Spleen (tissue), 13 donors: ENCODE measurements at regions of chr4 and their contacts with region 1.

Region 1: DNA sequence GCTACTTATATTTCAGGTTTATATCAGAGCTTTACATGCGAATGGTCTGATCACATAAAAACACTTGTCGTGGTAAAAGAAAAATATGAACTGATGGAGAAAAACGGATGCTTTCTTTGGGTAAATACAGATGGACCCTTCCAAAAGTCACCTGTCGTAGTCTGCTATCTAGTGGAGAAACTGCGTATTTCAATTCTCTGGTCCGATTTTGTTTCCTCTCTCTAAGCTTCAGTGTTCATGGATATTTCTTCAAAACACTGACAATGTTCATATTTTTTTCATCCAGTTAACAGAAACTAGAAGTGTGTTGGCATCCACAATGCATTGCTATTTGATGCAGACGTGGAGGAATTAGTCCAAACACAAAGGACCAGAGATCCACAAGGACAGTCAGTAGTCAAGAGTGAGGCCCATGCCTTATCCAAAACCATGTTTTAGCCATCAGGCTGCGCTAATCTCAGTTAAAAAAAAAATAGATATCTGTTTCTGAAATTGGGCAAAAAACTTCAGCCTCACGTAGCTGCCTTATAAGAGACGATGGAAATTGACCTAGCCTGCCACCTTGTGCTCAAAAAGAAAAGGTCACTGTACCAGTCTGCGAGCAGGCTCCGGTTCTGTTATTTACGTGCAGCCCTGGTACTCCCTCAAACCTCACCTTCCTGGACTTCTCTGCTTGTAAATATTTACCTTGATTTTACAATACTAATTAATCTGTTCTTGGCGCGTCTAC is 16.0 kb downstream of the MEPE start:
- DNase-seq: no peak
- H3K4me3 ChIP-seq: peak overlapping the region in 1 of 8 donors; percentile 46
- H3K27ac ChIP-seq: peak overlapping the region in 1 of 8 donors; percentile 84
- H3K4me1 ChIP-seq: peaks cover 0 to 36% (median 20%) of the 10 kb centered on the region in 6 donors
- H3K27me3 ChIP-seq: peaks cover 0 to 23% (median 0%) of the 10 kb centered on the region in 7 donors
- CTCF ChIP-seq: peak in 10 of 11 experiments; percentile 9 to 70 (median 55)
- POLR2A ChIP-seq: no peak

Region 2: DNA sequence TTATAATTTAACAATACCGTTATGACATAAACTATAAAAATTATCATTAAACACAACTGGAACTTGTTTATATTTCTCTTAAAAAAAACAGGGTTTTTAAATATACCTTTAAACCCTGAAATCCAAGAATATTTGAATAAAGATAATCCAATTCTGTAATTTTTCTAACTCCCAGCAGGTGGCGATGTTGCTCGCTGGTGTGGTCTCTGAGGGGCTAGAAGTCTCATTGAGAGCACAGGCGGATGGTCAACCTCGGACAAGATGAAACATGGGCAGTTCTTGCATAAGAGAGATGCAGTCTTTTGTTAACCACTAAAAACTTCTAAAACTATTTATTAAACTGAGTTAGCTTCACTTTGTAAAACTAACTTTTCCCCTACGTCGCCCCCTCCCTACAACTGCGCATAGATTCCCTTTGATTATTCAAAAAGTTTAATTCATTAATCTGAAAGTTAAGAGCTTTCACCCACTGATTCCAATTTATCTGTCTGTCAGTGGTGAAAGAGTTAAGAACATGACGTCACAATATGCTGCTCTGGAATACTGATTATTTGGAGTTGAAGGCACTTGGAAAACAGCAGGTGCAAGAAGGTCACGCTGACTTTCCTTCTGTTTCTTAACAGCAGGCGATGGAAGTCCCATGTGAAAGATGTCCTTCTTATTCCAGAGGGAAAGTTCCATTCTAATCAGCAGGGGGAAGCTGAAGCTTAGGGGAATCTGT is 169.2 kb before region 1 on chr4:
- intact Hi-C with region 1: loop called (anchors 5 kb)
- DNase-seq: no peak
- H3K4me3 ChIP-seq: no peak overlapping the region
- H3K27ac ChIP-seq: no peak overlapping the region
- H3K4me1 ChIP-seq: peaks cover 0 to 10% (median 0%) of the 10 kb centered on the region in 6 donors
- H3K27me3 ChIP-seq: no peaks in the 10 kb centered on the region
- CTCF ChIP-seq: peak; percentile 22 to 65 (median 62)
- POLR2A ChIP-seq: no peak

Region 3: DNA sequence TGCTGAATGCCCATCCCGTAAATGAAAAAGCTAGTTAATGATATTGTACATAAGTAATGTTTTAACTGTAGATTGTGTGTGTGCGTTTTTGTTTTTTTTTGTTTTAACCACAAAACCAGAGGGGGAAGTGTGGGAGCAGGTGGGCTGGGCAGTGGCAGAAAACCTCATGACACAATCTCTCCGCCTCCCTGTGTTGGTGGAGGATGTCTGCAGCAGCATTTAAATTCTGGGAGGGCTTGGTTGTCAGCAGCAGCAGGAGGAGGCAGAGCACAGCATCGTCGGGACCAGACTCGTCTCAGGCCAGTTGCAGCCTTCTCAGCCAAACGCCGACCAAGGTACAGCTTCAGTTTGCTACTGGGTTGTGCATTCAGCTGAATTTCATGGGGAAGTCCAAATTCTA is 126.7 kb after region 1 on chr4 and contains the start of gene SPP1:
- intact Hi-C with region 1: loop called (anchors 5 kb)
- DNase-seq: peak; percentile 50
- H3K4me3 ChIP-seq: no peak within 1 kb of the TSS
- H3K27ac ChIP-seq: no peak within 1 kb of the TSS
- H3K4me1 ChIP-seq: peaks cover 0 to 26% (median 10%) of the 10 kb centered on the region in 6 donors
- H3K27me3 ChIP-seq: peaks cover 0 to 50% (median 7%) of the 10 kb centered on the region in 7 donors
- CTCF ChIP-seq: no peak
- POLR2A ChIP-seq: no peak
- total RNA-seq, gene SPP1: 0.77 to 7.2 (median 1.5) TPM

Region 4: GRCh38 chr4:88211473-88212252 is 362.9 kb after region 1 on chr4:
- intact Hi-C with region 1: loop called (anchors 5 kb)
- DNase-seq: no peak
- H3K4me3 ChIP-seq: no peak overlapping the region
- H3K27ac ChIP-seq: no peak overlapping the region
- H3K4me1 ChIP-seq: peaks cover 0 to 6% (median 0%) of the 10 kb centered on the region in 6 donors
- H3K27me3 ChIP-seq: no peaks in the 10 kb centered on the region
- CTCF ChIP-seq: peak; percentile 35 to 79 (median 66)
- POLR2A ChIP-seq: no peak

Region 5: GRCh38 chr4:88268913-88269312 is 420.1 kb after region 1 on chr4:
- intact Hi-C with region 1: no loop called
- DNase-seq: no peak
- H3K4me3 ChIP-seq: no peak overlapping the region
- H3K27ac ChIP-seq: no peak overlapping the region
- H3K4me1 ChIP-seq: no peaks in the 10 kb centered on the region
- H3K27me3 ChIP-seq: no peaks in the 10 kb centered on the region
- CTCF ChIP-seq: no peak
- POLR2A ChIP-seq: no peak

Region 6: DNA sequence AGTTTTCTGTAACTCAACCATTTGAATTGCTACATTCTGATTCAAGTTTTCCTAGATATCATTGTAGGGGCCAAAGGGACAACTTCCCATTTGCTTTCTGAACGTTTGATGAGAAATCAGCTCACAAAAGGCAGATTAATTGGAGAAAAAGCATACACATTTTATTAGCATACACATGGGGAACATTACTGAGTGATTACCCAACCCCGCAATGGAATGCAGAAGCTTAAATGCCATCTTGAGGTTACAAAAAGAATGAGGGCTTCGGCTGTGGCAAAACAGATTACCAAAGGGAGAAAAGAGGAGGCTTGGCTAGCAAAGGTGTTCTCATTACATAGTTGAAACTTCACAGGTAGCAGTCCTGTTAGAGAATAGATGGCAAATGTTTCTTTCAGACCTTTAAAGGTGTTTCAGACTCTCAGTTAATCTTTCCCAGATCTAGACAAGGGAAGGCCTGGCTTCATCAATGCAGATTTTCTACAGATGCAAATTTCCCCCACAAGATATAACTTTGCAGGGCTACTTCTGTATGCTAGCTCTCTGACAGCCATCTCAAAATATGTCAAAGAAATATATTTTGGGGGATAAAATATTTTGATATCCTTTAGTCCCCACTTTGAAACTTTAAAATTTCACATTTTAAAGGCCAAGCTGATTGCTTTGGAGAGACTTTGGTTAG is 503.4 kb after region 1 on chr4:
- intact Hi-C with region 1: no loop called
- DNase-seq: no peak
- H3K4me3 ChIP-seq: no peak overlapping the region
- H3K27ac ChIP-seq: no peak overlapping the region
- H3K4me1 ChIP-seq: no peaks in the 10 kb centered on the region
- H3K27me3 ChIP-seq: no peaks in the 10 kb centered on the region
- CTCF ChIP-seq: no peak
- POLR2A ChIP-seq: no peak